ENCODE measurements at regions of chr12 and their contacts with region 1.

Region 1: DNA sequence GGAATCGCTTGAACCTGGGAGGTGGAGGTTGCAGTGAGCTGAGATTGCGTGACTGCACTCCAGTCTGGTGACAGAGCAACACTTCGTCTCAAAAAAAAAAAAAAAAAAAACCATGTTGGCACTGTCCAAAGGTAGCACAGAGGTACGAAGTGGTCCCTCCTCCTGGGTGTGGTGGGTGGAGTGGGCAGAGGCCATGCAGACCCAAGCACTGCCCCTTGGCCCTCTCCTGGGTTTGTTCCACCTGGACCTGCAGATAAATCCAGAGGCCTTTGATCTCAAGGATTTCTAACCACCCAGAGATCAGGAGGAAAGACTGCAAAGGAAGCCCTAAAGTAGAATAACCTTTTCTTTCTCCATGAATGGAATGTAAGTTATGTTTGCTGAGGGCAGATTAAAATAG is 8.7 kb upstream of the GALNT6 start:
- DNase-seq: peak; percentile 97 to 99
- H3K4me3 ChIP-seq: no peak overlapping the region
- H3K4me3 Mint-ChIP-seq: peak overlapping the region; percentile 59
- H3K27ac Mint-ChIP-seq: peak overlapping the region; percentile 90
- H3K4me1 ChIP-seq: peaks cover 82% of the 10 kb centered on the region
- H3K4me1 Mint-ChIP-seq: peaks cover 78% of the 10 kb centered on the region
- H3K27me3 ChIP-seq: no peaks in the 10 kb centered on the region
- H3K27me3 Mint-ChIP-seq: no peaks in the 10 kb centered on the region
- CTCF ChIP-seq: no peak

Region 2: GRCh38 chr12:51419425-51420208 is 19.7 kb after region 1 on chr12:
- CTCF ChIA-PET with region 1: interaction called, 15 read pairs
- POLR2A ChIA-PET with region 1: no interaction called
- intact Hi-C with region 1: loop called (anchors 1 kb)
- DNase-seq: peak in 1 of 2 experiments; percentile 41
- H3K4me3 ChIP-seq: no peak overlapping the region
- H3K4me3 Mint-ChIP-seq: no peak overlapping the region
- H3K27ac Mint-ChIP-seq: no peak overlapping the region
- H3K4me1 ChIP-seq: peaks cover 30% of the 10 kb centered on the region
- H3K4me1 Mint-ChIP-seq: peaks cover 30% of the 10 kb centered on the region
- H3K27me3 ChIP-seq: no peaks in the 10 kb centered on the region
- H3K27me3 Mint-ChIP-seq: no peaks in the 10 kb centered on the region
- CTCF ChIP-seq: peak; percentile 20 to 39

Region 3: GRCh38 chr12:51441583-51441982 is 41.7 kb after region 1 on chr12:
- CTCF ChIA-PET with region 1: no interaction called
- POLR2A ChIA-PET with region 1: no interaction called
- intact Hi-C with region 1: loop called (anchors 1 kb)
- DNase-seq: no peak
- H3K4me3 ChIP-seq: no peak overlapping the region
- H3K4me3 Mint-ChIP-seq: no peak overlapping the region
- H3K27ac Mint-ChIP-seq: peak overlapping the region; percentile 8
- H3K4me1 ChIP-seq: peaks cover 70% of the 10 kb centered on the region
- H3K4me1 Mint-ChIP-seq: peaks cover 47% of the 10 kb centered on the region
- H3K27me3 ChIP-seq: no peaks in the 10 kb centered on the region
- H3K27me3 Mint-ChIP-seq: no peaks in the 10 kb centered on the region
- CTCF ChIP-seq: no peak

Measured in Caco-2 (cell line).